Caco-2 (cell line): ENCODE measurements at regions of chr14 and their contacts with region 1.

Region 1: GRCh38 chr14:93759719-93760307 is 28.5 kb downstream of the PRIMA1 start:
- DNase-seq: no peak
- H3K4me3 ChIP-seq: no peak overlapping the region
- H3K4me3 Mint-ChIP-seq: no peak overlapping the region
- H3K27ac Mint-ChIP-seq: no peak overlapping the region
- H3K4me1 ChIP-seq: no peaks in the 10 kb centered on the region
- H3K4me1 Mint-ChIP-seq: no peaks in the 10 kb centered on the region
- H3K27me3 ChIP-seq: no peaks in the 10 kb centered on the region
- H3K27me3 Mint-ChIP-seq: no peaks in the 10 kb centered on the region
- CTCF ChIP-seq: no peak

Region 2: DNA sequence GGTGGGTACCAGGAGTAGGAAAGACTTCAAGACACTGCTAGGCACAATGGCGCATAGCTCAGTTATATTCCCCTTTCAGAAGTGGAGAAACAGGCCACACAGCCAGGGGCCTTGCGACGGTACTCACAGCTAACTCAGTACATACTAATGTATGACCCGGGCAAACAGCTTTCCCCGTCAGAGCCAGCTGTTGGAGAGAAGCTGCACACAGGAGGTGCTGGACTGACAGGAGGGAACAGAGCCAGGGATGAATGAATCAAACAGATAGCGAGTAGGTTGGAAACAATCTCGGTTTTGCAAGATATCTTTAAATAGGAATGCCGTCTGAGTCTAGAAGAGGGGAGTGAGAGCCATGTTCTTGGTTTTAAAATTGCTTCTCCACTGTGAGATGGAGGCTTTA is 17.1 kb before region 1 on chr14:
- CTCF ChIA-PET with region 1: no interaction called
- POLR2A ChIA-PET with region 1: no interaction called
- intact Hi-C with region 1: no loop called
- DNase-seq: no peak
- H3K4me3 ChIP-seq: no peak overlapping the region
- H3K4me3 Mint-ChIP-seq: no peak overlapping the region
- H3K27ac Mint-ChIP-seq: no peak overlapping the region
- H3K4me1 ChIP-seq: no peaks in the 10 kb centered on the region
- H3K4me1 Mint-ChIP-seq: peaks cover 7% of the 10 kb centered on the region
- H3K27me3 ChIP-seq: no peaks in the 10 kb centered on the region
- H3K27me3 Mint-ChIP-seq: no peaks in the 10 kb centered on the region
- CTCF ChIP-seq: no peak

Region 3: DNA sequence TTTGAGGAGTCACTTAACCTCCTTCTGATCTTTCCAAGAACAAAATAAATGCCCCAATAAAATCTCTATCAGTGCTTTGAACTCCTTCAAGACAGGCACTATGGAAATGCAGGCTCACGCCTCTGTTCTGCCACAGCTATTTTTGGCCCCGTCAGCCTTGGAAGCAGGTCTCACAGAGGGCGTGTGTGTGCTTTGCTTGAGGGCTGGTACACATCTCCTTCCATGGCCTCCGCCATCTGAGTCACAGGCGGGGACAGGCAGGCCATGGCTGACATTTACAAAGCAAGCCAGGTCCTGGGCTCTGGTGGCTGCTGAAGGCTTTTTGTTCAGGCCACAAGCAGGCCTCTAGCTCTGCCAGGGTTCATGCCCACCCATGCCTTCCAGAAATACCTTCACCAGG is 12.4 kb after region 1 on chr14:
- CTCF ChIA-PET with region 1: no interaction called
- POLR2A ChIA-PET with region 1: no interaction called
- intact Hi-C with region 1: no loop called
- DNase-seq: no peak
- H3K4me3 ChIP-seq: no peak overlapping the region
- H3K4me3 Mint-ChIP-seq: no peak overlapping the region
- H3K27ac Mint-ChIP-seq: no peak overlapping the region
- H3K4me1 ChIP-seq: no peaks in the 10 kb centered on the region
- H3K4me1 Mint-ChIP-seq: no peaks in the 10 kb centered on the region
- H3K27me3 ChIP-seq: no peaks in the 10 kb centered on the region
- H3K27me3 Mint-ChIP-seq: no peaks in the 10 kb centered on the region
- CTCF ChIP-seq: no peak

Region 4: GRCh38 chr14:93880021-93880820 is 120.4 kb after region 1 on chr14:
- CTCF ChIA-PET with region 1: no interaction called
- POLR2A ChIA-PET with region 1: interaction called, 10 read pairs
- intact Hi-C with region 1: no loop called
- DNase-seq: no peak
- H3K4me3 ChIP-seq: no peak overlapping the region
- H3K4me3 Mint-ChIP-seq: no peak overlapping the region
- H3K27ac Mint-ChIP-seq: no peak overlapping the region
- H3K4me1 ChIP-seq: no peaks in the 10 kb centered on the region
- H3K4me1 Mint-ChIP-seq: no peaks in the 10 kb centered on the region
- H3K27me3 ChIP-seq: no peaks in the 10 kb centered on the region
- H3K27me3 Mint-ChIP-seq: peaks cover 4% of the 10 kb centered on the region
- CTCF ChIP-seq: no peak